ENCODE measurements at regions of chr20 and their contacts with region 1.

Region 1: DNA sequence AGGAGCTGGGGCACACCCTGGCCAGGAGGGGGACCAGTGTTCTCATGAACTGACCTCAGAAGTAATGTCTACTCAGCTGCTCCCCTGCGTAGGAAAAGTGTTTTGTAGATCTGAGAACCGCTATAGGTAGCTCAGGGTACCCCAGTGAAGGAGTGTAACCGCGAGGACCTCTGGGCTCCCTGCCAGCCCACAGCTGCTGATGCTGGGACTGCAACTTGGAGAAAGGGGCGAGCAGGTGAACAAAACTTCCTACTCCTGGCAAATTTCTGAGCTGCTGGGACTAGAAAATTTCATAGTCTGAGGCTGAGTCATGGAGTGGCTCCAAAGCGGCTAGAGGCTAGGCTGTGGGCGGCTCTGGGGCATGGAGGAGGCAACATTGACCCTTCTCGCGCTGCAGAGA is 51.9 kb downstream of the PYGB start:
- H3K4me3 ChIP-seq: no peak overlapping the region
- H3K27ac ChIP-seq: peak overlapping the region; percentile 41; the same call in 1 of the 2 replicates
- H3K4me1 ChIP-seq: no peaks in the 10 kb centered on the region
- CTCF ChIP-seq: no peak

Region 2: GRCh38 chr20:25390538-25391528 is 91.0 kb after region 1 on chr20 and contains the start of gene ABHD12:
- CTCF ChIA-PET with region 1: interaction called, 3 read pairs
- POLR2A ChIA-PET with region 1: interaction called, 10 read pairs
- H3K4me3 ChIP-seq: peak within 1 kb of the TSS; percentile 99
- H3K27ac ChIP-seq: peak within 1 kb of the TSS; percentile 93
- H3K4me1 ChIP-seq: peaks cover 2% of the 10 kb centered on the region; the same call in 1 of the 2 replicates
- CTCF ChIP-seq: no peak